ENCODE measurements at regions of chr19 and their contacts with region 1.

Region 1: DNA sequence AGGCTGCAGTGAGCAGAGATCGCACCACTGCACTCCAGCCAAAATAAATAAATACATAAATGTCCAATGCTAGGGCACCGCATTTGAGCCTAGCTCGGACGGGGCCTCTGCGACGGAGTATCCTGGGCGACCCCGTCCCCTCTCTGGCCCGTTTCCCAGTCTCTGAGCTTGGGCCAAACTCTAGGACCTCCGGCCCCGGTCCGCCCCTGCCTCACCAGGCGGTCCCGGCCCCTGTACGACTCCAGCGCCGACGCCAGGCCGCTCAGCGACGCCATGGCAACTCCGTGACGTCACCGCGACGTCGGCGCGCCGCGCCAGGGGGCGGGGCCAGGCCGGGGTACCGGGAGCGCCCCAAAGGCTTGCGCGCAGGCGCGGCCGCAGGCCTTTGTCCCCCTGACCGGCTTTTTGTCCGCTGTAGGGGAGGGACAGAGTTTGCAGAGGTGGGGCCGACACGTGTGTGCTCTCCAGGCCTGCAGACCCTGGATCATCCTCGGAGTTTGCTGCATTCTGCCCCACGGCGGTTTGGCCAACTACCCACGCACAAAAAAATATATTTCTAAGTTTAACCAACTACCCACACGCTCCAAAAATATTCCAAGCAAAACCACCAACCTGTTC is at the start of gene PEX11G:
- DNase-seq: peak; percentile 93
- ATAC-seq: peak; percentile 99
- H3K4me3 ChIP-seq: peak within 1 kb of the TSS; percentile 43 to 67 (median 61)
- H3K4me3 Mint-ChIP-seq: peak within 1 kb of the TSS; percentile 90
- H3K27ac ChIP-seq: peak within 1 kb of the TSS in 1 of 2 donors; percentile 67
- H3K27ac Mint-ChIP-seq: peak within 1 kb of the TSS; percentile 81
- H3K4me1 ChIP-seq: peaks cover 5 to 14% of the 10 kb centered on the region in 2 donors
- H3K4me1 Mint-ChIP-seq: peaks cover 7% of the 10 kb centered on the region
- H3K27me3 ChIP-seq: peaks cover 0 to 3% (median 0%) of the 10 kb centered on the region in 4 experiments
- H3K27me3 Mint-ChIP-seq: no peaks in the 10 kb centered on the region
- CTCF ChIP-seq: no peak
- total RNA-seq, gene PEX11G: 0.62 and 0.68 TPM in 2 replicates

Region 2: GRCh38 chr19:7004313-7004931 is 484.4 kb before region 1 on chr19:
- CTCF ChIA-PET with region 1: no interaction called
- POLR2A ChIA-PET with region 1: no interaction called
- intact Hi-C with region 1: no loop called
- DNase-seq: peak; percentile 49
- ATAC-seq: no peak
- H3K4me3 ChIP-seq: no peak overlapping the region
- H3K4me3 Mint-ChIP-seq: no peak overlapping the region
- H3K27ac ChIP-seq: no peak overlapping the region
- H3K27ac Mint-ChIP-seq: no peak overlapping the region
- H3K4me1 ChIP-seq: no peaks in the 10 kb centered on the region
- H3K4me1 Mint-ChIP-seq: no peaks in the 10 kb centered on the region
- H3K27me3 ChIP-seq: no peaks in the 10 kb centered on the region
- H3K27me3 Mint-ChIP-seq: peaks cover 4% of the 10 kb centered on the region
- CTCF ChIP-seq: no peak

Region 3: GRCh38 chr19:7505682-7506384 is 17.0 kb after region 1 on chr19:
- CTCF ChIA-PET with region 1: no interaction called
- POLR2A ChIA-PET with region 1: no interaction called
- intact Hi-C with region 1: loop called (anchors 2 kb)
- DNase-seq: no peak
- ATAC-seq: no peak
- H3K4me3 ChIP-seq: peak overlapping the region in 1 of 5 experiments; percentile 24
- H3K4me3 Mint-ChIP-seq: peak overlapping the region; percentile 29
- H3K27ac ChIP-seq: no peak overlapping the region
- H3K27ac Mint-ChIP-seq: no peak overlapping the region
- H3K4me1 ChIP-seq: peaks cover 16 to 18% of the 10 kb centered on the region in 2 donors
- H3K4me1 Mint-ChIP-seq: peaks cover 12% of the 10 kb centered on the region
- H3K27me3 ChIP-seq: peaks cover 0 to 58% (median 25%) of the 10 kb centered on the region in 4 experiments
- H3K27me3 Mint-ChIP-seq: peaks cover 40% of the 10 kb centered on the region
- CTCF ChIP-seq: no peak

Region 4: DNA sequence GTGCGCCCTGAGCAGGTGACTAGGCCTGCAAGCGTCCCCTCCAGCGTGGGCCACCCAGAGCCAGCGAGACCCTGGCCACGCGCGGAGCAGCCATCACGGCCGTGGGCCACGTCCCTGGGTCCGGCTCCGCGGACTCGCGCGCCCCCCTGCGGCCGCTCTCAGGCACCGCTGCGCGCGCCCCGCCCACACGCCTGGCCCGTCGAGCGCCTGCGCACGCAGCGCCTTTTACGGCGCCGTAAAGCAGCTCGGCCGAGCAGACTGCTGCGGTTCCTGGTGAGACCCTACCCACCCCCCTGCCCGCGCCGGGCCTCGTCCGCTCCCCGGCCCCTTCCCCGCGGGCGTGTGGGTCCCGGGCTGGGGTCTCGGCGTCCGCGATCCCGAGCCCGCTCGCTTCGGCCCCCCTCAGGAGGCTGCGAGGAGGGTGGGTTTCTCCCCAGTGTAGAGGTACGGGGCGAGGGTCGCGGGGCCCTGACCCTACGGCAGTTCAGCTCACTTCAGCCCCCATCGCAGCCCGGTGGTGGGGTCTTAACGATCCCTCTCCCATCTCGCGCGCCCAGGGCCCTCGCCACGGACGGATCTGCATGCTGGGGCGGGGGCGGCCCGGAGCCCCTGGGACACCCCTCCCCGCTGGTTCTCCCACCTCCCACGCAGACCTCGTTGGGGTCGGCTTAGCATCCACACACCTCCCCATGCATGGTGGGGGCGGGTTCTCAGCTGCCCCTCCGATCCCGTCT is 191.9 kb after region 1 on chr19 and contains the start of gene TRAPPC5:
- CTCF ChIA-PET with region 1: no interaction called
- POLR2A ChIA-PET with region 1: no interaction called
- intact Hi-C with region 1: no loop called
- DNase-seq: peak; percentile 93
- ATAC-seq: peak; percentile 65
- H3K4me3 ChIP-seq: peak within 1 kb of the TSS; percentile 35 to 98 (median 93)
- H3K4me3 Mint-ChIP-seq: peak within 1 kb of the TSS; percentile 87
- H3K27ac ChIP-seq: peak within 1 kb of the TSS; percentile 79 to 92
- H3K27ac Mint-ChIP-seq: peak within 1 kb of the TSS; percentile 92
- H3K4me1 ChIP-seq: peaks cover 37 to 45% of the 10 kb centered on the region in 2 donors
- H3K4me1 Mint-ChIP-seq: peaks cover 63% of the 10 kb centered on the region
- H3K27me3 ChIP-seq: peaks cover 0 to 21% (median 3%) of the 10 kb centered on the region in 4 experiments
- H3K27me3 Mint-ChIP-seq: peaks cover 15% of the 10 kb centered on the region
- CTCF ChIP-seq: peak; percentile 95
- total RNA-seq, gene TRAPPC5: 61.2 and 61.5 TPM in 2 replicates